GM10248 (cell line): ENCODE measurements at regions of chr4 and their contacts with region 1.

Region 1: DNA sequence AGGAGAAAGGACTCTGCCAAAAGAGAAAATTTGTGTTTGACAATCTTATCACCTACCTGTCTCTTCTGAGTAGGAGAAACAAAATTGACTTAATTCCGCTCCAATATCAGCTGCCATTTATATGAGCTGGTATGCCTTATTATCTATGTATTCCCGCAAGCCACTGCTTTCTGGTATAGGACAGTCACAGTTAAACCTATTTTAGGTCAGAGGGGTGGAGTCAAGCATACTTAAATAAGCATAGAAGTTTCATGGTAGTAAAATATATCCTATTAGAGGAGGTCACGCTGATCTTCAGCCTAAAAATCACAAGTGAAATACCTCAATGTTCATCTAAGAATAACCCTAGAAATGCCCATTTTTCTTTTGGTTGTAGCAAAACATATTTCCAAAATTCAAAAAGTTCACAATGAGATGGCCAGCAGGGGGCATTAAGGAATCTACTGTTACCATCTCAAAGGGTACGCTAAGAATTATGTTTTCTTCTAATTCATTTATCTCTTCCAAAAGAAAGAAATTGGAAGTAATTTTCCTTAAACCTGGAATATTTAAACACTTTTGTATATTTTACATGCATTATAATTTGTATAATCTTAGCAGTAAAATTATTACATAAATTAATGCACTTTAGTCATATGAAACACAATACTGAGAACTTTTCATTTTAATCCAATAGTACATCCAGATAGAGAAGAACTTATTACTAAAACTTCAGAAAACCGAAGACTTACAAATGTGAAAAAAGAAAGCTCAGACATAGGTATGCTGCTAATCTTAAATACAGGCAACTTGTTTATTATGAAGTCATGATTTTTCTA is 10.5 kb downstream of the PPAT start:
- DNase-seq: peak; percentile 30
- CTCF ChIP-seq: peak; percentile 52

Region 2: GRCh38 chr4:56387023-56388001 is 37.6 kb before region 1 on chr4 and contains the start of gene AASDH:
- CTCF ChIA-PET with region 1: interaction called, 14 read pairs
- POLR2A ChIA-PET with region 1: no interaction called
- DNase-seq: peak; percentile 91
- CTCF ChIP-seq: no peak

Region 3: DNA sequence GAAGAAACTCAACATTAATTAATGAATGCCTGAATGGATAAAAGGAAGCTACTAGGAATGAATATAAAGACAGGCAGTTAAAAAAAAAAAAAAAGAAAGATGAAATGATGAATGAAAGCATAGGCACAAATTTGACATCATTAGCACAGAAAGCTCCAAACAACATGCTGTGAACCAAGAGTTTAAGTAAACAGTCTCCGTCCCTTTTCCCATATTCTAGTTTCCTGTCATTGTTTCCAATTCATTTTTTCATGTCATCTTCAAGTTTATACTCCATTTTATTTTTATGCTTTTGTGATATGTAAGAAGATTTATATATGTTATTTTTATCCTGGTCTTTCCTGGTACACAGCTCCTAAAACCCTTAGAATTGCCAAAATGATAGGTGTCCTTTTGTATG is 19.9 kb before region 1 on chr4:
- CTCF ChIA-PET with region 1: interaction called, 36 read pairs
- POLR2A ChIA-PET with region 1: no interaction called
- DNase-seq: no peak
- CTCF ChIP-seq: no peak

Region 4: DNA sequence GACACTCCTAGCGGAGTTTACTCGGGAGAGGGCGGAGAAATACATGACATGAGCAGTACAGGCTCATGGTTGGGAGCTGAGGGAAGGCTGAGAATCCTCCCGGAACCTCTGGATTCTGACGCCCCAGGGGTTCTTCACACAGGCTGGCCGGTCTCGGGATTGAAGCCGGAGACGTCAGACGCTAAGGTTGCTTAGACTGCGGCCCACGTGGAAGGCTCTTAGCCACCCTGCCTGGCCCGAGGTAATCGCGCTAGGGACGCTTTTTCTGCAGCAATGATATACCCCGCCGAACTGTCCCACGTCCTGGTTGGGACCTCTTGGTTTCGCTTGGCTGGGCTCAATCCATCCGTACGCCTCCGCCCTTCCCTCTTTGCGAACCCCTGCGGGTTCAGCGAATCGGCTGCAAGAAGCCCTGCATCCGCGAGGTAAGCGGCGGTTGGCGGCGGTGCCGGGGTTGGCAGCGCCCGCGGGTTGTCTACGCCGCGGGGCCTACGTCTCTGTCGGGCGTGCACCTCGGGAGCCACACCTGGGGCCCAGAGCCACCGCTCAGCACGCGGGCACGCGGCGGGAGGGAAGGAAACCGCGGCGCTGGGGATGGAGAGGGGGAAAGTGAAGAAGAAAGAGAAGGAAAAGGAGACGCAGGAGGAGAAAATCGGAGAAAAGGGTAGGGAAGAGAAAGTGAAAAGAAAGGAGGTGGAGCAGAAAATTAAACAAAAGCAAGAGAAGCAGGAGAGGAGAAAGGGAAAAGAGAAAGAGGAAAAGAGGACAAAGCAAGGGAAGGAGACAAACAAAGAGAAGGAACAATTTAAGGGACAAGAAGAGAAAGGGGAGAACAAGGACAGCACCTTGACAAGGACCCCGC is 80.6 kb after region 1 on chr4 and contains the start of gene ARL9:
- CTCF ChIA-PET with region 1: no interaction called
- POLR2A ChIA-PET with region 1: no interaction called
- DNase-seq: peak; percentile 41
- CTCF ChIP-seq: no peak

Region 5: GRCh38 chr4:56544573-56545131 is 119.7 kb after region 1 on chr4:
- CTCF ChIA-PET with region 1: interaction called, 10 read pairs
- POLR2A ChIA-PET with region 1: no interaction called
- DNase-seq: peak; percentile 86
- CTCF ChIP-seq: peak; percentile 100